ENCODE measurements at regions of chr15 and their contacts with region 1.

Region 1: DNA sequence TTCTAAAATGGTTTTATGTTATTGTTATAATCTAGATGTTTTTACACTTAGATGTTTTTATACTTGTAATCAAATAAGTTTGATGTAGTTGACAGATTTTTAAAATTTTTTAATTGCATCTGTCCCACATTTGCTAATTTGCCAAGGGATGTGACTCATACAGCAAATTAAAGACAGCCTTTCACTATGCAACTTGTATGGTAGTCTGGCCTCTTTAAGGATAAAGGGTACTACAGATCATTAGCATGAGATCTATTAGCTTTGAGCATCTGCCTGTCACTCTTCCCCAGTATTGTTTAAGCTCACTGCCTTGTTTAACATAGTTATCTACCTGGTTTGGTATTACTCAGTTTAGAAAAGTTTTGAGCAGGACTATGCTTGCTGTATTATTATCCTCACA is 83.0 kb downstream of the NPTN start:
- DNase-seq: no peak
- H3K4me3 ChIP-seq: no peak overlapping the region
- H3K27ac ChIP-seq: no peak overlapping the region
- H3K4me1 ChIP-seq: no peaks in the 10 kb centered on the region
- H3K27me3 ChIP-seq: no peaks in the 10 kb centered on the region
- CTCF ChIP-seq: no peak
- POLR2A ChIP-seq: no peak

Region 2: DNA sequence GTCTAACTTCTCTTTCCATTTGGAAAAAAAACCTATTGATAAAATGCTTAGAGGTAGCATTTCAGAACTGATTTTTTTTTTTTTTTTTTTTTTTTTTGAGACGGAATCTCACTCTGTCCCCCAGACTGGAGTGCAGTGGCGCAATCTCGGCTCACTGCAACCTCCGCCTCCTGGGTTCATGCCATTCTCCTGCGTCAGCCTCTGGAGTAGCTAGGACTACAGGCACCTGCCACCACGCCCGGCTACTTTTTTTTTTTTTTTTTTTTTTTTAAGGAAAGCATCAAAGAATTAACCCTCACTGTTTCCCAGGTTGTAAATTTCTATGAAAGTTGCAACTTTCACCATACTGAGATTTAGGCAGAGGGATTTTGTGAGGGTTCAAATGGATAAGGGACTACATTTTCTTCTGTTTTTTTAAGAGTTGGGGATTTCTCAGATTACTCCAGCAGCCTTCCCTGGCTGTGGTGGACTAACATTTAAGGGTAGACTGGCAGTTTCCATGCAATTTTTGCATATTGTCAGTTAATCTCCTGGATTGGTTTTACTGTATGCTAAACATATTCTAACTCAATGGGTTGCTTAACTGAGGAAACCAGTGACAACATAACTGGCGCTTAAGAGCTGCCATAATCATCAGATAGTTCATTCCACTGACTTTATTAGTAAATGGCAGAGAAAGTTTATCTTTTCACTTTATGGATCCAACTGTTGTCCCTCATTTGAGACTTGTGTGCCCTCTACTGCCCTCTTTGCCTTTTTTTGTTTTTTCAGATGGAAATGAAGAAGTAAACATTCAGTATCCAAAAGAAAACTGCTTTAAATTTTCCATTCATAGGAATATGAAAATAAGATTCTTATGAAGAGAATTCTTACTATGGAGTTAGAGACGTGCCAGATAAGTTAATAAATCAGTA is 10.7 kb before region 1 on chr15:
- intact Hi-C with region 1: no loop called
- DNase-seq: no peak
- H3K4me3 ChIP-seq: no peak overlapping the region
- H3K27ac ChIP-seq: no peak overlapping the region
- H3K4me1 ChIP-seq: no peaks in the 10 kb centered on the region
- H3K27me3 ChIP-seq: no peaks in the 10 kb centered on the region
- CTCF ChIP-seq: no peak
- POLR2A ChIP-seq: no peak

Region 3: DNA sequence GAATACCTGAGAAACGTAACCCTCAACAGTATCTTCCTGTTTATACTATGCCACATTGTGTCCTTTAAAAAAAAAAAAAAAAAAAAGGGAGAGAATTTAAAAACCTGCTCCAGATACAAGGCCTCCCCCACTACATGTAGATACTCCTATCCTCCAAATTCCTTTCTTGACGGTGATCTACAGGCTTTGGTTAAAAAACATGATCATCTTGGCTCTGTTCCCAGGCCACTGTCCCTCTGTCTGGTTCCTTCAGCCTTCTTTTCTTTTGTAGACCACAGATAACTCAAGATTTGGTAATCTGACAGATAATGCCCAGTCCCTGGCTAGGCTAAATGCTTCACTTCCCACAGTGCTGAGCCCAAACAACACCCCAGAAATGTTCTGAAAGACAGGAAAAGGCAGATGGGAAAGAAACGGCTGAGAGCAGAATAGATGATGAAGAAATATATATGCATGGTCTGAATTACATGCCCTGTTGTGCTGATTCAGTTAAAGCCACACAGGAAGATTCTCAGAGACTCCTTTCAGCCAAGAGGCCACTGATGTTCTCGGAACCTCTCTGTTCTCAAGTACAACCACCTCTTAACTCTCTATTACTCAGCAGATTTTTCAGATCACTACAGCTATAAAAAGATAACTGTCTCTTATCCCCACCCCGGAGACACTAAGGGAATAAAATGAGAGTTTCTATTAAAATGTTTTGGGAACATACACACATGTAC is 34.7 kb after region 1 on chr15:
- intact Hi-C with region 1: no loop called
- DNase-seq: no peak
- H3K4me3 ChIP-seq: no peak overlapping the region
- H3K27ac ChIP-seq: no peak overlapping the region
- H3K4me1 ChIP-seq: no peaks in the 10 kb centered on the region
- H3K27me3 ChIP-seq: no peaks in the 10 kb centered on the region
- CTCF ChIP-seq: no peak
- POLR2A ChIP-seq: no peak

Region 4: DNA sequence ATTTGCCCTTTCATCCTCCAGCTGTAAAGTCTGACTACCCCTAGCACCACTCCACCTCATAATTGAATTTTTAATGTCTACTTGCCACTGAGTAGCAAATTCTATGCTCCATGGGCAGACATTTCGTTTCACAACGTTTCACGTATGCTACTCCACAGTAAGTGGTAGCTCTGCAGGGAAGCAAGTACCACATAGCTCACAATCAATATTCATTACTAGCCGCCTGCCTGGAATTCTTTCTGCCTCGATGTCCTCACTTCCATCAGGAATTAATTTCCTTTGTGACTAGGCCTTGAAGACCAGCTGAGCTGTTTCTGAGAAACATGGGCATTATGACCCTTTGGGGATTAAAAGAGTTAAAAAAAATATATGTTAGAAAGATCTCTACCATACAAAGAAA is 67.7 kb after region 1 on chr15:
- intact Hi-C with region 1: loop called (anchors 2 kb)
- DNase-seq: no peak
- H3K4me3 ChIP-seq: no peak overlapping the region
- H3K27ac ChIP-seq: no peak overlapping the region
- H3K4me1 ChIP-seq: no peaks in the 10 kb centered on the region
- H3K27me3 ChIP-seq: no peaks in the 10 kb centered on the region
- CTCF ChIP-seq: no peak
- POLR2A ChIP-seq: no peak

Region 5: GRCh38 chr15:73964736-73965093 is 414.5 kb after region 1 on chr15:
- intact Hi-C with region 1: no loop called
- DNase-seq: peak; percentile 67 to 76
- H3K4me3 ChIP-seq: no peak overlapping the region
- H3K27ac ChIP-seq: no peak overlapping the region
- H3K4me1 ChIP-seq: no peaks in the 10 kb centered on the region
- H3K27me3 ChIP-seq: no peaks in the 10 kb centered on the region
- CTCF ChIP-seq: peak; percentile 85 to 87 (median 86)
- POLR2A ChIP-seq: no peak